ENCODE measurements at regions of chr6 and their contacts with region 1.

Region 1: DNA sequence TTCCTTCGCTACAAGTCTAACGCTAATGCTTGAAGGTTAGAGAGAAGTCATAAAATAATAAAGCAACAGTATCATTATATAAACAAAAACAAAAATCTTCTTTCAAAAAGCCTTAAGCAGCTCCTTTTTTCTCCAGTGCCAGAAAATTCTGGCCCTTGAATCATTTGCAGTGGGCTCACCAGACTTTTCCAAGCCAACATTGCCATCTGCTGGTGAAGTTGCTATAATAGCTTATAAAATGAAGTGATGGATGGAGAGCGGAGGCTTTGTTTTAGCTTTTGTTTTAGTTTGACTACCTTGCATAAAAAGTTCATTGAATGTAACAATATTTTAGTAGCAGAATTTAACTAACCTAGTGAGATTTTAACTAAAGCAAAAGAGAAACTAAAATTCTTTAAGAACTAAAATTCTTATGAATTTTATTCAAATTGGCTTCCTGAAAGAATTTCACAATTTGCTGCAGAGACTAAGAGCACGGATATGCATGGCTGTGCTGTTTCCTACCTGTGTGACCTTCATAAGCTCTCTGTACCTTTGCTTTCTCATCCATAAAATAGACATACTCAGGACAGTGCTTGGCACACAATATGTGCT is 44.8 kb upstream of the SLC2A12 start:
- DNase-seq: peak; percentile 80
- H3K4me3 ChIP-seq: no peak overlapping the region
- H3K27ac ChIP-seq: no peak overlapping the region
- H3K4me1 ChIP-seq: peaks cover 10% of the 10 kb centered on the region
- H3K27me3 ChIP-seq: no peaks in the 10 kb centered on the region
- CTCF ChIP-seq: peak; percentile 70

Region 2: GRCh38 chr6:133568970-133569889 is 528.0 kb before region 1 on chr6:
- CTCF ChIA-PET with region 1: interaction called, 7 read pairs
- POLR2A ChIA-PET with region 1: no interaction called
- intact Hi-C with region 1: loop called (anchors 5 kb)
- DNase-seq: peak; percentile 67
- H3K4me3 ChIP-seq: peak overlapping the region; percentile 27
- H3K27ac ChIP-seq: no peak overlapping the region
- H3K4me1 ChIP-seq: peaks cover 3% of the 10 kb centered on the region
- H3K27me3 ChIP-seq: peaks cover 90% of the 10 kb centered on the region
- CTCF ChIP-seq: peak; percentile 94

Region 3: DNA sequence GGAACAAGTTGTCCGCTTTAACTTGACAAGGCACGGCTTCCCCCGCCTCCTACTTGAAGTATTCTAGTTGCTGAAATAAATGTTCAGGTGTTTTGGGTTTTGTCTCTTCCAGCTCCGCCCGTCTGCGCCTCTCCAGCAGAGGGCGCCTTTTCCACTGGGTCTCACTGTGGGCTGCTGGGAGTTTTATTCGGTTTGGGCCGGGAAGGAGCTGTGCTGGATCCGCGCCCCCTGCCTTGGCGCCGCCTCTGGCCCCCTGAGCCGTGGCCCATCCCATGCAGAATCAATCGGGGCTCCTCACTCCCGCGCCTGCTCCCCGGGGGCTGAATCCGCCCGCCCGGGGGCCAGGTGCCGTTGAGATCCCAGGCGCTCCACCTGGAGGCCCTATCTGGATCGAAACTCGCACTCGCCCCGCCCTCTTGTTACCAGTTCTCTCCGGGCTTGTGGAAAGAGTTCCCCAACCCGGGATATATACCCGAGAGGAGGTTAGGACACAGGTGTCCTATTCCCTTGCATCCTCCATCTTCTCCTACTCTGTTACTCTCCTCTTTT is 259.3 kb before region 1 on chr6:
- CTCF ChIA-PET with region 1: interaction called, 17 read pairs
- POLR2A ChIA-PET with region 1: no interaction called
- intact Hi-C with region 1: no loop called
- DNase-seq: peak; percentile 68
- H3K4me3 ChIP-seq: peak overlapping the region; percentile 37
- H3K27ac ChIP-seq: no peak overlapping the region
- H3K4me1 ChIP-seq: no peaks in the 10 kb centered on the region
- H3K27me3 ChIP-seq: peaks cover 54% of the 10 kb centered on the region
- CTCF ChIP-seq: peak; percentile 87

Region 4: DNA sequence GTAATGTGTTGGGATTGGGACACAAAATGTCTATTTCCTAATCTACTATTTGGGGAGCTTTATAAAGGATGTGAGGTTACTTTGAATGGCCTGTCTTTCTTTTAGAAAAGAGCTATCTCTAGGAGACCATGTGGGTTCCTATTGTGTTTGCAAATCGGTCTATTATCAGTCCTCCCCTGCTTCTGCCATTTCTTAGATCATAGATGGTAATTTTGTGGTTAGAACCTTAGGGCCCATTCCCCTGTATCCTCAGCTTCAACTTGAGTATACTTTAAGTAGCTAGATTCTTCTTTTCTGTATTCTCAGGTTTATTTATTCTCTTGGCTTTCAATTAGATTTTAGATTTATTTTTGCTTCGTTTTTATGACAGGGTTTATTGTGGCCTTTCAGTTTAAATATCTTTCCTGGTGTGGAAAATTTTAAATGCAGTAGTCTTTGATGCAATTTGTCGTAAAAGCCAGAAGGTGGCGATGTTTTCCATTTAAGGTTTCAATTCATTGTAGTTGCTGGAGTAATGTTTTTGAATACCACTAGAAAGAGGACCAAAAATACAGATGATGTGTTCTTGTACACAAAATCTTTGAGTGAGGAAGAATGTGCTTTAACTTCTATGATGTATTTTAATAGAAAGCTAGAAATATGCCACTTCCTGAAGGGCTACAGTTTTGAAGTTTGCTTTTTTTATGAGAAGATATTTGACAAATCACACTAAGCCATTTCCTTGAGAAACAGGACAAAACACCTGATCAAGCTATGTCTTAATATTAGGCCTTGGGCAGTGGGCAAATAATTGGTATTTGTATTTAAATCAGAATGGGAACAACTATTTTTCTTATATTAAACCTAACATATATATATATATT is 123.9 kb before region 1 on chr6:
- CTCF ChIA-PET with region 1: interaction called, 10 read pairs
- POLR2A ChIA-PET with region 1: no interaction called
- intact Hi-C with region 1: loop called (anchors 2 kb)
- DNase-seq: peak; percentile 65
- H3K4me3 ChIP-seq: no peak overlapping the region
- H3K27ac ChIP-seq: no peak overlapping the region
- H3K4me1 ChIP-seq: peaks cover 4% of the 10 kb centered on the region
- H3K27me3 ChIP-seq: no peaks in the 10 kb centered on the region
- CTCF ChIP-seq: peak; percentile 76